ENCODE measurements at regions of chr5 and their contacts with region 1.

Region 1: DNA sequence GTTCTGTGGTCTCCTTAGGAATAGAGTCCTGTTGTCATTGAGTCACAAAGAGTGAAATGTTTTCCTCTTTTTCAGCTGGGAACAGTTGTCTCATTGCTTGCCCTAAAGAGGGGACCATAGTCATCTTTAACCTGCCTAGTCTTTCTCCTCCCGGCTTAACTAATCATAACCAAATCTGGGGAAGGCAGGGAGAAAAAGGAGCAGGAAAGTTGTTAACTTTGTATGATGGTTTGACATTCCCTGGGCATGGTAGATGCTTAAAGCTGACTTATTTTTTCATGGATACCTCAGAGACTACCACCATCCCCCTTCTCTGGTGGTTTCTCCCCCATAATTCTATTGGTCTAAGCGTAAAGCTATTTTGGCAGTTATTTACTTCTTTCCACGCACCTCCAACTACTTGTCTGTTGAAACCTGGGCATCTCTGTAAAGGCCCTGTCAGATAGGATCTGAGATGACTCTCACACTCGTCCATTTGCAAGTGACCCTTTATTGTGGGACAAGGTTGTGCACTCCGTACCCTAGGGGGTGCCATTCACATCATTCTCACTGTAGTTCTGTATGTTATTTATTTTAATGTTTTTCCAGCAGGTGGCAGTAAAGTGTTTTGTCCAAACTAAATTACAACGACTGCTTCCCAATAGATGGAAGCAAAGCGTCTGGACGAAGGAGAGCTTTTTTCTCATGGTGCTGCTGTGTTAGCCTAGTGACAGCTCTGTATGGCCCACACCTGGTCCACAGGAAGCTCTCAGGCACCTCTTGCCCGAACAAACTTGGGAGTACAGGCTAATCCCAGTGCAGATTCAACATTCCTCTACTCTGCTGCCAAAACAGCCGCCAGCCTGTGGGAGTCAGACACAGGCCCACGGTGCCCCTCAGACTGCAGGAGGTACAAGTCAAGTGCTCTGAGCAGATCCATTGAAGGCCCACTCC is 3.0 kb upstream of the FAM13B start:
- DNase-seq: no peak

Region 2: DNA sequence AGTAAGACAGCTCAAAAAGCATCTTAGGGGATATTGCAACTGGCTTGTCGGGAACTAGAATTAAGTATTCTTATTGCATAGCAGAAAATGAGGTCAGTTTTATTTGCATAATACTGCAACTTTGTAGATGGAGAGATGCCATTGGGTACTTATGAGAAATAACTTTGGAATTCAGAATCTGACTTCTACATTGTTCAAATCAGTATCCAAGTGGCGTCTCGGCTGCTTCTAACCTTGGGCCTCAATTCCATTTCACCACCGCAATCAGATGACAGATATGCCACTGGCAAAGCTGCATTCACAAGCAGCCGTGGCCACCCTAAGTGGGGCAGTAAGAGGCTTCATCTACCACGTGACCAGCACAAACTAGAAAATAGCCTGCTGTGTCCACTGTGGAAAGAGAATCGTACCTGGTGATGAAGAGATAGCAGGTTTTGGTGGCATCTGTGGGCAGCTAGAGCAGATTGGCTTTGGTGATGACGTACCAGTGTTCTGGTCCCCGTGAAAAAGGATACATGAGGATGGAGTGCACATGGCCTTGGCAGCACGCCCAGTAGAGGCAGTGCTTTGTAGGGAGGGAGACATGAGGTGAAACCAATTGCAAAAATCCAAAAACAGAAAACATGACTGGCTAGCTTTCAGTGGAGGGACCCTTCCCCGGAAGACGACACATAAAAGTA is 416.5 kb before region 1 on chr5:
- intact Hi-C with region 1: no loop called
- DNase-seq: peak; percentile 85

Region 3: DNA sequence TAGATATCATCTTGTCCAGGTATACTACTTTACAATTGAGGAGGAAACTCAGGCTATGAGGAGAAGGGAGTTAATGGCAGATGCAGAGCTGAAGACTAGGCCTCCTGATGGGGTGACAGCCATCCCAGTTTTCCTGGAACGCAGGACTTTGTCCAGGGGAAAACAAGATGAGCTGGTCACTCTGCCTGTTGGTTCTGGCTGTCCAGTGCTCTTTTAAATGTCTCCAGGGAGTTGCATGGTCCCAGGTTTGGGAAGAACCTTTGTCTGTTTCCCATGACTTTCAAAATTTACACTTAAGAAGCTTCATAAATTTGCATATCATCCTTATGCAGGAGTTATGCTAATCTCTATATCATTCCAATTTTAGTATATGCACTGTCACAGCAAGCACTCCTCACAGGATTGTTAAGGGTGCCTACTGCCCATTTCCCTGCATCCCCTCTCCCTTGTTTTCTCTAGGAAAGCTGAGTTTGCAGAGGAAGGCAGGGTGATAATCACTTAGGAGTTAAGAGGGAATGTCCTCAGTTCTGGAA is 33.3 kb after region 1 on chr5:
- intact Hi-C with region 1: loop called in 1 of 2 experiments (anchors 2 kb)
- DNase-seq: no peak

Region 4: DNA sequence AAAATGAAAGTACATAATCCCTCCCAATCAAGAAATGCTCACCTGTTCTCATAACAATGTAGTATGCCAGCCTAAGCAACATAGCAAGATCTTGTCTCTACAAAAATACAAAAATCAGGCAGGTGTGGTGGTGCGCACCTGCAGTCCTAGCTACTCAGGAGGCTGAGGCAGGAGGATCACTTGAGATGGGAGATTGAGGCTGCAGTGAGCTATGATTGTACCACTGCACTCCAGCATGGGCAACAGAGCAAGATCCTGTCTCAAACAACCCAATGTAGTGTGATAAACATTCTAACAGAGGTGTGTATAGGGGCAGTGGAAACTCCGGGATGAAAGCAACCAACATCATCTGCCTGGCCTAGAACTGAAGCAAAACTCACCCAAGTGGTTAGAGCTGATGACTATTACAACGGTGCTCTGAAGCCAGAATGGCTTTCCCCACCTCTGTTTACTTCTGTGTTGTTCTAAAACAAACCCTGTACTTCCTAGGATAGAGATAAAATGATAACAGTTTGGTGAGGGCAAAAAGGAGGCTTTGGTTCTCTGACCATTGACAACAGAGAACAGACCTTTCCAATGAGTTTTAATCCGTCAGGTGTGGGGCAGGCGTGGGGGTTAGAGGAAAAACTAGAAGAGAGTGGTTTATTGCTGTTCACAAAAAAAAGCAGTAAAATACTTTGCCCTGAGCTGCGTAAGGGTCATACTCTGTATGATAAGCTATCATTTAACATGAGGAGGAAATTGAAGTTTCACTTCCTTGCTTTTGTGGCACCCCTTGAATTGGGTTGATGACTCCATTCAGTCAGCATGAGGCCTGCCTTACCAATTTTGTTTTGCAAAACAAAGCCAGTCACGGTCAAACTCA is 66.8 kb after region 1 on chr5:
- intact Hi-C with region 1: no loop called
- DNase-seq: no peak

Region 5: DNA sequence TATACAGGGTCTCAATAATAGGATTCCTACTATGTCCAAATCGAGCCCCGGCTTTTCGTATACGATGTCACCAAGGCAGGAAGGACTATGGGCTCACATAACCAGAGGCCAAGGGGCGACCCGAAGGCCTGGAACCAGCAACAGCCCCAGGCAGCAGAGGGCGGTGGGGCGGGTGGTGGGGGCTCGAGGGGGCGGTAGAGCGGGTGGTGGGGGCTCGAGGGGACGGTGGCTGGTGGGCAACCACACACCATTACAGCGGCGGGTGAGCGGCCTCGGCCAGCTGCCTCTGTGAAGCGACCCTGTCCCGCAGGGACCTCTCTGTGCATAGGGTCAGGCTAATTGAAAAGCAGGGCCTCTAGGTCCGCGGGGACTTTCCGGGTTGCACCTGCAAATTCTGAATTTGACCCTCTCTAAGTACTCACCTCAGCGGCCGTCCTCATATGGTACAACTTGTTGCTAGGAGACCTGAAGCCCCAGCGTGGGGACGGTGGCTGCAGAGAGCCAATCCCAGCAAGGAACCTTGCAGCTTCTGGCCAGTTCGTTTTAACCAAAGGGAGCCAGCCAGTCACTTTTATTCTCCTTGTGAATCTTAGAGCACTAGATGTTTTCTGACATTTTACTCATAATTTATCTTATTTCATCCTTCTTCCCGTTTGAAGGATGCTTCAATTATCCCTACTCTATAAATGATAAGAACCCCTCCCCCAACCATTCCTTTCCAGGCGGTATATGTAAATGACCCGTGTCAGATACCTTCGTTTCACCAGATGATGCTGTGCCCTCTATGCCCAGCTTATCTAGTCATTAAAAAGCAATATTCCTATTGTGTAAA is 103.3 kb after region 1 on chr5 and contains the start of gene NME5:
- intact Hi-C with region 1: loop called in 1 of 2 experiments (anchors 10 kb)
- DNase-seq: peak; percentile 88
- total RNA-seq, gene NME5: 1.5 to 2.3 TPM

Region 6: GRCh38 chr5:138282920-138283742 is 247.3 kb after region 1 on chr5:
- intact Hi-C with region 1: loop called in 1 of 2 experiments (anchors 5 kb)
- DNase-seq: no peak

Region 7: DNA sequence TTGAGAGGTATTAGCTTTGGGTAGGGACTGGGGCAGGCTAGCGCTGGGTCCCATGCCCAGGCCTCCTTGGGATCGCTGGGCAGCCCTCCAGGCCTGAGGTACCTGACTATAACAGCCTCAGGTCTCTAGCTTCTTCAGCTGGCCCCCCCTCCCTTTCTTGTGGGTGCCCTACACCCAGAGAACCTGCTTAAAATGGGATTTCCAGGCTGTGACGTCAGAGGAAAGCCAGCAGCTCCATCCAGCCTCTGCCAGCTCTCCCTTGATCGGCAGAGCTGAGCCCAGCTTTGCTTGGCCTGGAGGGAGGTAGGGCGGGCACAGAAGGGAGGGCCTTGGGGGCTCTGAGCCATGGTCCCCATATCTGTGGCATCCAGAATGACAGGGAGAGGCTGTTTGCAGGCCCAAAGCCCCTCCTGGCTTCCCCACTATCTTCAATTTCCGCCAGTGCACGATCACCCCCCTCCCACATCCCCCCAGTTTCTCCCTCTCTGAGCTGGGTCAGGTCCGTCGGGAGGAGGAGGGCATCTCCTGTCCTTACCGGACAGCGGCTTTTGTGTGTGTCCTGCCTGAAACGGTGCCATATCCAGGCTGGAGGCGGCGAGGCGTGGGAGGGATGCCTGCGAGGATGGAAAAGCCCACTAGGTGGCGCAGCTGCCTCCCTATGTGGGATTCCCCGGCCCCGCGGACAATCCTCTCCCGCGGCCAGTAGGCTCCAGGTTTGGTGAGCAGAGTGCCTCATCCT is 413.8 kb after region 1 on chr5:
- intact Hi-C with region 1: no loop called
- DNase-seq: peak; percentile 96

Measured in posterior vena cava (tissue), 2 donors.